RWPE1 (cell line): ENCODE measurements at regions of chr6 and their contacts with region 1.

Region 1: GRCh38 chr6:158571826-158572652 is 12.1 kb downstream of the TMEM181 start:
- DNase-seq: no peak
- H3K27ac ChIP-seq: peak overlapping the region; percentile 47
- CTCF ChIP-seq: no peak

Region 2: GRCh38 chr6:158999666-159000403 is 427.8 kb after region 1 on chr6 and contains the start of gene RSPH3:
- CTCF ChIA-PET with region 1: interaction called, 10 read pairs
- POLR2A ChIA-PET with region 1: no interaction called
- DNase-seq: peak; percentile 96
- H3K27ac ChIP-seq: peak within 1 kb of the TSS; percentile 96
- CTCF ChIP-seq: peak; percentile 38